PC-9 (cell line): ENCODE measurements at regions of chr3 and their contacts with region 1.

Region 1: GRCh38 chr3:194450341-194450740 is 36.5 kb downstream of the ATP13A3 start:
- DNase-seq: no peak
- H3K4me3 ChIP-seq: no peak overlapping the region
- H3K27ac ChIP-seq: 0 out of 2 replicates have a peak overlapping the region, but pooled peaks have one; percentile 4
- H3K4me1 ChIP-seq: no peaks in the 10 kb centered on the region
- H3K27me3 ChIP-seq: no peaks in the 10 kb centered on the region
- CTCF ChIP-seq: no peak

Region 2: DNA sequence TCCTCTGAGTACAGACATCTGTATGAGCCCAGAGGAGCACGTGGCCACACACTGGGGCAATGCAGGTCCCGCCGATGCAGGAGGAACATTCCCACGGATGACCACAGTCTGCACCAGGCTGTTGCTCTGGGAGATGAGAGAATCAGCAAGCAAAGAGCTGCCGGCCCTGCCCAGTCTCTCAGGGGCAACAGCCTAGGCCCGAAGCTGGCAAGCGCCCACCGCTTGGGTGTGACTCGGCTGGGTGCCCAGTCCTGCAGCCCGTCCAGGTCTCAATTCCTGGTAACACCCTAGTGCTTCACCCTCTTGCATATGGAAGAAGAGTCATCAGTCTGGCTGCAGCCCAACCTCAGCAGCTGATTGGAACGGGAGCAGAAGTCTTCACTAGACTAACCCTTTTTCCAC is 468.1 kb before region 1 on chr3:
- CTCF ChIA-PET with region 1: no interaction called
- POLR2A ChIA-PET with region 1: no interaction called
- intact Hi-C with region 1: no loop called
- DNase-seq: peak in 1 of 2 experiments; percentile 97
- H3K4me3 ChIP-seq: no peak overlapping the region
- H3K27ac ChIP-seq: no peak overlapping the region
- H3K4me1 ChIP-seq: 0 out of 2 replicates have a peak, but pooled peaks cover 6% of the 10 kb centered on the region
- H3K27me3 ChIP-seq: no peaks in the 10 kb centered on the region
- CTCF ChIP-seq: no peak

Region 3: DNA sequence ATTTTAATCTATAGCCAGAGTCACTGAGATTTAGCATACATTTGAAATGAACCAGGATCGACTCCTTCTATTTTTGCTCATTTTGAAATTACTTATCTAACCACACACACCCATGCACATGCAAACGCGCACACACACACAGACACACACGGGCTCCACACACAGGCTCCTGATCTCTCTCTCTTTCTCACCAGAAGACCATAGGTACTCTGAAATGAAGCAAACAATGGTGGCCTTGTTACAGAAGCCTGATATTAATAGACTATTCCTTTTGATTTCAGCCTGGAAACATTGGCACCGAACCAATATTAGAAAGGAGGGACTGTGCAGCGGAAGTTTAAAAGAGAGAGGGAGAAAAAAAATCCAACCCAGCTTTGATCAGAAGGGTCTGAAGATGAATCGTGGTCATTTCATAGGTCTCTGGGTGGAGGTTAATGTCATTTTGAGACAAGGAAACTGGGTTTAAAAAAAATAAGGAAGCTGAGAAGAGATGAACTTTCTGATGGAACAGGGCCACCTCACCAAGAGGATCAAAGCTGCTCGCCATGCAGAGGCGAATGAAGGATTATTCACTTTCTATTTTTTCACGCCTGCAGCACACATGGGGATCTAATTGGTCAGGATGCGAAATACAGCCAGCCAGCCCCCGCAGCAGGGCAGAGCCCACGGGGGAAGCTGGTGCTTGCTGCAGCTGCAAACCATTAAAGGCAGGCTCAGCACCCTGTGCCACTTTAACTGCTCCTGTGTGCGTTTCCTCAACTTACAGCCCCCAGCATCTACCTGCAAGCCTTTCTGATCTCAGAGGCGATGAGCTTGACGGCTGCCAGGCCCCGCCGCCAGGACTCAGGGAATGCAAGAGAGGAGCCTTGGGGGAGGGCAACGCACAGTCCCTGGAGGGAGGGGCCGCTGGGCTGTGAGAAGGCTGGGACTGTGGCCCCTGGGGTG is 225.6 kb before region 1 on chr3:
- CTCF ChIA-PET with region 1: no interaction called
- POLR2A ChIA-PET with region 1: no interaction called
- intact Hi-C with region 1: no loop called
- DNase-seq: no peak
- H3K4me3 ChIP-seq: no peak overlapping the region
- H3K27ac ChIP-seq: no peak overlapping the region
- H3K4me1 ChIP-seq: peaks cover 6% of the 10 kb centered on the region
- H3K27me3 ChIP-seq: no peaks in the 10 kb centered on the region
- CTCF ChIP-seq: no peak

Region 4: GRCh38 chr3:194521514-194522260 is 71.3 kb after region 1 on chr3:
- CTCF ChIA-PET with region 1: no interaction called
- POLR2A ChIA-PET with region 1: interaction called, 11 read pairs
- intact Hi-C with region 1: no loop called
- DNase-seq: peak in 1 of 2 experiments; percentile 93
- H3K4me3 ChIP-seq: no peak overlapping the region
- H3K27ac ChIP-seq: peak overlapping the region; percentile 59
- H3K4me1 ChIP-seq: peaks cover 65% of the 10 kb centered on the region
- H3K27me3 ChIP-seq: no peaks in the 10 kb centered on the region
- CTCF ChIP-seq: no peak

Region 5: DNA sequence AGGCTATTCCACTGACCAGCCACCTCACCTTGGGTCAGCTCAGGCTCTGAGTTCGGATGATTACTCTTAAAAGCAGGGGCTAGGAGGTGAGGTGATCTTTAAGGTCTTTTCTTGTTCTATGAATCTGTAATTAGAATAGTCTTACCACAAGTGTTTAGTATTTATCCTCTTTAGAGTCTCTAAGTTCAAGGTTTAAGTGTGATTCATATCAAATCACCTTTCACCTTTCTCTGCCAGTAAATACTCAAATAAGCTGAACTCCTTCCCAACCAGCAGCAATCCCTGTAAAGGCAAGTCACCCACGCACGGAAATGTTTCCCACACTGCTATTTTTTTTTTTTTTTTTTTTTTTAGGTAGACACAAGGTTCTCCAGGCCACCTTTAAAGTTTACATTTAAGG is 197.4 kb after region 1 on chr3:
- CTCF ChIA-PET with region 1: no interaction called
- POLR2A ChIA-PET with region 1: no interaction called
- intact Hi-C with region 1: loop called (anchors 5 kb)
- DNase-seq: no peak
- H3K4me3 ChIP-seq: no peak overlapping the region
- H3K27ac ChIP-seq: no peak overlapping the region
- H3K4me1 ChIP-seq: no peaks in the 10 kb centered on the region
- H3K27me3 ChIP-seq: no peaks in the 10 kb centered on the region
- CTCF ChIP-seq: no peak

Region 6: GRCh38 chr3:194769020-194769643 is 318.8 kb after region 1 on chr3:
- CTCF ChIA-PET with region 1: no interaction called
- POLR2A ChIA-PET with region 1: no interaction called
- intact Hi-C with region 1: no loop called
- DNase-seq: peak; percentile 96 to 97
- H3K4me3 ChIP-seq: peak overlapping the region; percentile 50; the same call in 1 of the 2 replicates
- H3K27ac ChIP-seq: no peak overlapping the region
- H3K4me1 ChIP-seq: peaks cover 26% of the 10 kb centered on the region
- H3K27me3 ChIP-seq: no peaks in the 10 kb centered on the region
- CTCF ChIP-seq: 0 out of 2 replicates have a peak, but pooled peaks have one; percentile 28